AG04450 (cell line): ENCODE measurements at regions of chr12 and their contacts with region 1.

Region 1: DNA sequence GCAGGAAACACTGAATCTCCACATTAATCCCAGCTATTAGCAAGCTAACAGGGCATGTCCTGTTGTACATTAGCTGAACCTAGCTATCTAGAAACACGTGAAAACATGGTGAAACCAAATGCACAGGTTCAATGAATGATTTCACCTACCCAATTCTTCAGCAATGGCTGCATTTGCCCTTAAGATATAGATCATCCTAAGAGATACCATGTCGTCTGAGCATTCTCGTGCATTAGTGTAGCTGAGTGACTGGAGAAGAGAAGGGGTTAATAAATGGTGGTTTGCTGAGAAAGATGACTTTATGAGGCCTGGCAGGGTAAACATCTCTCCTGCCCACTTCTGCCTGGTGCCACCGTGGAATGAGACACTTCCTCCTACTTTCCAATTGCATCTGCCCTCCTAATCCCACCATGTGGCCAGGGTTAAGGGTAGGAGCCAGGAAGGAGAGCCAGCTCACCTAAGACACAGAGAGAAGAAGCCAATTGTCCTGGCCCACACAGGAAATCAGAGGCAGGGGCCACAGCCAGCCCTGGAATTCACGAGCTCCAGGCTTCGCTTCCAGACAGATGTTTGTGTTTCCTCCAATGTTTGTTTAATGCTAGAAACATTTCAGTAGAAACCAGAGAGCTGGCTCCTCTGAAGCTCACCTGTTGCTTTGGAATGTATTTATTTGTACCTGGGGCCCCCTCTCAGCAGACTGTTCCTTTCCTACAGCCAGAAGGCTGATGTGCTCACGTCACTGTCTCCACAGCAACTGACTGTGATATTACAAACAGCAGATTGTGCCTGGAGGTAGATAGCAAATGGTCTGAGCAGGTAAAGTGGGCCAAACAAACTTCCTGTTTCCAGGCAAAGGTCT is 126.0 kb upstream of the PARP11 start:
- DNase-seq: no peak
- H3K4me3 ChIP-seq: no peak overlapping the region
- H3K27ac ChIP-seq: no peak overlapping the region
- H3K27me3 ChIP-seq: peaks cover 6% of the 10 kb centered on the region
- CTCF ChIP-seq: no peak

Region 2: GRCh38 chr12:4030929-4031702 is 31.9 kb after region 1 on chr12:
- CTCF ChIA-PET with region 1: interaction called, 170 read pairs
- POLR2A ChIA-PET with region 1: interaction called, 10 read pairs
- DNase-seq: peak; percentile 96
- H3K4me3 ChIP-seq: peak overlapping the region; percentile 48
- H3K27ac ChIP-seq: peak overlapping the region; percentile 89
- H3K27me3 ChIP-seq: peaks cover 9% of the 10 kb centered on the region
- CTCF ChIP-seq: no peak

Region 3: DNA sequence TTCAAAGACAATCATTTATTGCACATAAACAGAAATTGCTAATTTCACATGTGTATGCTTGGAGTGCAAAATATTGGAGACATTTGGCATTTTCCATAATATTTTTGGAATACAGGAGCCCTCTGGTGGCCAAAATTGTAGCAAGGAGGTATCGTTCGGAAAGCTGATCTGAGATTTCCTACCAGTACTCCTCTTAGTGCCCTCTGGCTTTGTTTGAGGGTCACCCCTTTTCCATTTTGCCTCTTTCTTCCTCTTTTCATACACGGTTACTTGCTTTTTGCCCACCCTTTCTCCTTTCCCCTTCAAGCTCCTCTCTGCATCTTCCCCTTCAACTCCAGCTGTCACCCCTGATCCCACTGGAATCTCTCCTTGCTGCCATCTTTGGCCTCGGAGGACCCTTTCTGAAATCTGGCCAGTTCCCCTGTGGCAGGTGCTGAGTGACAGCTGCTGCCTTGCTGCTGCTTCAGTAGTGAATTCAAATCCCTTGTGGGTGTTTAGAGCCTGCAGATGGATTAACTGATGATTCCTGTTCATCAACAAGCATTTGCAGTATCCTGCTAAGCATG is 38.6 kb after region 1 on chr12:
- CTCF ChIA-PET with region 1: interaction called, 170 read pairs
- POLR2A ChIA-PET with region 1: interaction called, 10 read pairs
- DNase-seq: no peak
- H3K4me3 ChIP-seq: no peak overlapping the region
- H3K27ac ChIP-seq: no peak overlapping the region
- H3K27me3 ChIP-seq: peaks cover 15% of the 10 kb centered on the region
- CTCF ChIP-seq: peak; percentile 76